HEK293 (cell line): ENCODE measurements at regions of chr15 and their contacts with region 1.

Region 1: GRCh38 chr15:79978655-79979514 is 7.9 kb upstream of the BCL2A1 start:
- H3K4me3 ChIP-seq: no peak overlapping the region
- H3K27ac ChIP-seq: no peak overlapping the region
- H3K4me1 ChIP-seq: no peaks in the 10 kb centered on the region
- CTCF ChIP-seq: no peak

Region 2: DNA sequence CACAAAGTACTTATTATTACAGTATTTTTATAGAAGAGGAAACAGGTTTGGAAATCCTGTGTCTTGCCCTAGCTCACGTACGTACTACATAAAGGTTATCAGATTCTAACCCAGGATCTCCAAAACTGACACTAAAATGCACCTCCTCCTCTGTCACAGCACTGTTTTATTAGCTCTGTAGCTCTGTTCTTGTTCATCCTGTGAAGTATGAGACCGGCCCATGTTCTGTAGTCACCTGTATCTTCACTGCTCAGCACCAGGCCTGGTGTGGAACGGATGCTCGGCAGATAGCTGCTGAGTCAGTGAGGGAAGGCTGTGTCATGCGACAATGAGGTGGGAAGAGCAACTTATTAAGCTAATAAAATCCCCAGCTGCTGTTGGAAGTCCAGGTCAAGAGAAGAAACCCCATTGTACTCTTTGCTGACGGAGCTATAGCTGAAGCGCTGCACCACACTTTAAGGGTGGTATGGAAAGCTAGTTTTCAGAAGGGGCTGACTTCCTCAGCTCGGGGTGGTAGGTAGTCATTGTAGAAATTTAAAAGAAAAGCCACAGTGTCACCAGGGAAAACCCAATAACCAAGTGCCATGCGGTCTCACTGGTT is 30.7 kb before region 1 on chr15:
- CTCF ChIA-PET with region 1: no interaction called
- POLR2A ChIA-PET with region 1: no interaction called
- H3K4me3 ChIP-seq: no peak overlapping the region
- H3K27ac ChIP-seq: no peak overlapping the region
- H3K4me1 ChIP-seq: no peaks in the 10 kb centered on the region
- CTCF ChIP-seq: no peak

Region 3: GRCh38 chr15:79989682-79990081 is 10.8 kb after region 1 on chr15:
- CTCF ChIA-PET with region 1: interaction called, 14 read pairs
- POLR2A ChIA-PET with region 1: no interaction called
- H3K4me3 ChIP-seq: no peak overlapping the region
- H3K27ac ChIP-seq: no peak overlapping the region
- H3K4me1 ChIP-seq: no peaks in the 10 kb centered on the region
- CTCF ChIP-seq: no peak